Endothelial cell of umbilical vein (primary cell): ENCODE measurements at regions of chr10 and their contacts with region 1.

Region 1: DNA sequence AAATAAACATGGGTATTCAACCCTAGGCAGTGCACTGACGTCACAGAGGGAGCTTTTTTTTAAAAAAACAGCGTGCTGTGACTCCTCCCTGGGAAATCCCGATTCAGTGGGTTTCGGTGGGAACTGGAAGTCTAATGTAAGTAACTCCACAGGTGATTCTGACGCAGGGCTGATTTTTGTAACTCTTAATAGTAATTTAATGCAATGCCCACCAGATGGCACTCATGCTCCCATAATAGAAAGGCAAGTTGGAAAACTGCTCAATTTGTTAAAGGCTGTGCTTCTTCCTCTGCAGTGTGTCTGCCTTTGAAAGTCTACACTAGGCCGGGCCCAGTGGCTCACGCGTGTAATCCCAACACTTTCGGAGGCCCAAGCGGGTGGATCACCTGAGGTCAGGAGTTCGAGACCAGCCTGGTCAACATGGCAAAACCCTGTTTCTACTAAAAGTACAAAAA is 10.9 kb upstream of the RSU1 start:
- DNase-seq: peak; percentile 93
- H3K4me3 ChIP-seq: peak overlapping the region in 1 of 3 experiments; percentile 51
- H3K27ac ChIP-seq: peak overlapping the region; percentile 71
- H3K4me1 ChIP-seq: peaks cover 34% of the 10 kb centered on the region
- H3K27me3 ChIP-seq: no peaks in the 10 kb centered on the region
- CTCF ChIP-seq: peak; percentile 35 to 39
- POLR2A ChIP-seq: no peak

Region 2: GRCh38 chr10:16644147-16644546 is 184.0 kb before region 1 on chr10:
- CTCF ChIA-PET with region 1: no interaction called
- POLR2A ChIA-PET with region 1: no interaction called
- dilution Hi-C with region 1: no loop called
- intact Hi-C with region 1: no loop called
- DNase-seq: peak; percentile 77
- H3K4me3 ChIP-seq: no peak overlapping the region
- H3K27ac ChIP-seq: peak overlapping the region; percentile 21
- H3K4me1 ChIP-seq: peaks cover 15% of the 10 kb centered on the region
- H3K27me3 ChIP-seq: no peaks in the 10 kb centered on the region
- CTCF ChIP-seq: no peak
- POLR2A ChIP-seq: no peak

Region 3: DNA sequence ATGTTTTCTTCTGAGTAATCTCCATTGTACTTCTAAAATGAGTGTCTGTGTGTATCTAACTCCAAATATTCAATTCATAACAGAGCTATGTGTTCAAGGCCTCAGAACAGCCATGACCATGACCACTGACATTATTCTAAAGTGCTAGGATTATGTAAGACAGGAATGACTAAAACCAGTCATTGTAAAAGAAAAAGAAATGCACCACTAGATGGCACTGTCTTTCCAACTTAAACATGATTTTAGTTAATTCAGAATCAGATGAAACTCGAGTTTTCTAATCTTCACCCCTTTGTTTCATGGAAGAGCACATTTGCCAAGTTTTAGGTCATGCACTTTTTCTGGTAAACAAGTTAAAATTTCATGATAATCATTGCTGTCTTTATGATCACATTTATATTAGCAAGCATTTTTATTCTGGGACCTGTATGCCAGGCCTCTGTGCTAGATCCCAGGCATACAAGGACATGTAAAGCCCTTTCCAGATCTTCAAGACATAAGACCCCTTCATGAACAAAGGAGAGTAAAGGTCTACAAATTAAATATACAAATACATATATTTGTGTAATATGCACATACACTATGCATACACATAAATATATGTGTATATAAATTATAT is 15.2 kb after region 1 on chr10:
- CTCF ChIA-PET with region 1: interaction called, 11 read pairs
- POLR2A ChIA-PET with region 1: no interaction called
- dilution Hi-C with region 1: no loop called
- intact Hi-C with region 1: loop called (anchors 1 kb)
- DNase-seq: peak; percentile 83
- H3K4me3 ChIP-seq: no peak overlapping the region
- H3K27ac ChIP-seq: peak overlapping the region; percentile 32
- H3K4me1 ChIP-seq: peaks cover 2% of the 10 kb centered on the region
- H3K27me3 ChIP-seq: no peaks in the 10 kb centered on the region
- CTCF ChIP-seq: peak; percentile 19 to 27
- POLR2A ChIP-seq: no peak

Region 4: DNA sequence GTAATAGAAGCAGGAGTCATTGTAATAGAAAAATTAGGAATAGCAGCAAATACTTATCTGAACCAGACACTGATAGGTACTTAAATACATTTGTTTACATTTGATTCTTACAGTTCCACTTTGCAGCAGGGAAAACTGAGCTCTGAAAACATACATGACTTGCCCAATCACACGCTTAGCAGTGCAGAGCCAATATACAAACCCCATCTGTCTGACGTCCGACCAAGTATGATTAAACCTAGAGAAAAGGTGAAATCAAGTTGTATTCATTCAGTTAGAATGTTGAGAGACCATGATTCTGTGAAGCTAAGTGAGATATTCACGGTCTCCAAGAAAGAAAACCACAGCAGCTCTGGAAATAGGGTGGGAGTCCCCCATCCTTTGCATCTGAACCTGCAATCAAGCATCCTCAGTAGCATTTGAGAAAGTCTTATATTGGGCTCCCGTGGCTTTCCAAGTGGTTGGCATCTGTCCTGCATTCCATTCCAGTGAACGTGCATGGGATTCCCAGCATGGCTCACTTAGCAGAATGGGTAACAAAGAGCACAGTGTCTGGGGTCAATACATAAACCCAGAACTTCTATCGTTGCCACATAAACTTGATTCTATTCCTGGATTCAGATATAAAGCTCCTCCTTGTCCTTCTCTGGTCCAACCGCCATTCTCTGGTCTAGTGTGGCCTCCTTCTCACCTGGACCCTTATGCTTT is 137.8 kb after region 1 on chr10:
- CTCF ChIA-PET with region 1: no interaction called
- POLR2A ChIA-PET with region 1: interaction called, 4 read pairs
- dilution Hi-C with region 1: no loop called
- intact Hi-C with region 1: loop called (anchors 1 kb)
- DNase-seq: peak; percentile 91
- H3K4me3 ChIP-seq: no peak overlapping the region
- H3K27ac ChIP-seq: peak overlapping the region; percentile 98
- H3K4me1 ChIP-seq: peaks cover 40% of the 10 kb centered on the region
- H3K27me3 ChIP-seq: no peaks in the 10 kb centered on the region
- CTCF ChIP-seq: no peak
- POLR2A ChIP-seq: peak; percentile 44

Region 5: GRCh38 chr10:17228091-17228940 is 400.2 kb after region 1 on chr10 and contains the start of gene VIM:
- CTCF ChIA-PET with region 1: interaction called, 4 read pairs
- POLR2A ChIA-PET with region 1: interaction called, 5 read pairs
- dilution Hi-C with region 1: no loop called
- intact Hi-C with region 1: loop called (anchors 1 kb)
- DNase-seq: peak; percentile 97
- H3K4me3 ChIP-seq: peak within 1 kb of the TSS; percentile 66 to 87 (median 83)
- H3K27ac ChIP-seq: peak within 1 kb of the TSS; percentile 99
- H3K4me1 ChIP-seq: peaks cover 24% of the 10 kb centered on the region
- H3K27me3 ChIP-seq: no peaks in the 10 kb centered on the region
- CTCF ChIP-seq: peak in 1 of 2 donors; percentile 16
- POLR2A ChIP-seq: peak; percentile 92
- total RNA-seq, gene VIM: 5,754 and 5,781 TPM in 2 replicates

Region 6: GRCh38 chr10:17375936-17376584 is 547.9 kb after region 1 on chr10:
- CTCF ChIA-PET with region 1: no interaction called
- POLR2A ChIA-PET with region 1: no interaction called
- dilution Hi-C with region 1: no loop called
- intact Hi-C with region 1: loop called (anchors 1 kb)
- DNase-seq: peak; percentile 2
- H3K4me3 ChIP-seq: no peak overlapping the region
- H3K27ac ChIP-seq: no peak overlapping the region
- H3K4me1 ChIP-seq: no peaks in the 10 kb centered on the region
- H3K27me3 ChIP-seq: no peaks in the 10 kb centered on the region
- CTCF ChIP-seq: peak; percentile 41 to 71
- POLR2A ChIP-seq: no peak

Region 7: GRCh38 chr10:17512341-17513001 is 684.3 kb after region 1 on chr10:
- CTCF ChIA-PET with region 1: no interaction called
- POLR2A ChIA-PET with region 1: no interaction called
- dilution Hi-C with region 1: no loop called
- intact Hi-C with region 1: loop called (anchors 5 kb)
- DNase-seq: peak; percentile 99
- H3K4me3 ChIP-seq: no peak overlapping the region
- H3K27ac ChIP-seq: peak overlapping the region; percentile 94
- H3K4me1 ChIP-seq: peaks cover 46% of the 10 kb centered on the region
- H3K27me3 ChIP-seq: no peaks in the 10 kb centered on the region
- CTCF ChIP-seq: no peak
- POLR2A ChIP-seq: peak; percentile 26

Region 8: GRCh38 chr10:17872191-17873091 is 1044.3 kb after region 1 on chr10:
- CTCF ChIA-PET with region 1: no interaction called
- POLR2A ChIA-PET with region 1: no interaction called
- dilution Hi-C with region 1: no loop called
- intact Hi-C with region 1: loop called (anchors 5 kb)
- DNase-seq: peak; percentile 73
- H3K4me3 ChIP-seq: no peak overlapping the region
- H3K27ac ChIP-seq: no peak overlapping the region
- H3K4me1 ChIP-seq: no peaks in the 10 kb centered on the region
- H3K27me3 ChIP-seq: no peaks in the 10 kb centered on the region
- CTCF ChIP-seq: peak; percentile 57 to 58
- POLR2A ChIP-seq: no peak